Vagina (tissue), 2 donors: ENCODE measurements at regions of chr12 and their contacts with region 1.

Region 1: GRCh38 chr12:127923501-127923900 is 343.5 kb upstream of the TMEM132C start:
- DNase-seq: no peak
- H3K4me3 ChIP-seq: no peak overlapping the region
- H3K27ac ChIP-seq: no peak overlapping the region
- H3K4me1 ChIP-seq: no peaks in the 10 kb centered on the region
- H3K27me3 ChIP-seq: no peaks in the 10 kb centered on the region
- CTCF ChIP-seq: no peak
- POLR2A ChIP-seq: no peak

Region 2: GRCh38 chr12:127690161-127690560 is 233.3 kb before region 1 on chr12:
- intact Hi-C with region 1: loop called (anchors 5 kb)
- DNase-seq: no peak
- H3K4me3 ChIP-seq: no peak overlapping the region
- H3K27ac ChIP-seq: no peak overlapping the region
- H3K4me1 ChIP-seq: no peaks in the 10 kb centered on the region
- H3K27me3 ChIP-seq: no peaks in the 10 kb centered on the region
- CTCF ChIP-seq: no peak
- POLR2A ChIP-seq: no peak

Region 3: GRCh38 chr12:127881371-127882140 is 41.9 kb before region 1 on chr12:
- intact Hi-C with region 1: no loop called
- DNase-seq: no peak
- H3K4me3 ChIP-seq: no peak overlapping the region
- H3K27ac ChIP-seq: no peak overlapping the region
- H3K4me1 ChIP-seq: no peaks in the 10 kb centered on the region
- H3K27me3 ChIP-seq: no peaks in the 10 kb centered on the region
- CTCF ChIP-seq: no peak
- POLR2A ChIP-seq: no peak